CD14-positive monocyte (primary cell): ENCODE measurements at regions of chr19 and their contacts with region 1.

Region 1: DNA sequence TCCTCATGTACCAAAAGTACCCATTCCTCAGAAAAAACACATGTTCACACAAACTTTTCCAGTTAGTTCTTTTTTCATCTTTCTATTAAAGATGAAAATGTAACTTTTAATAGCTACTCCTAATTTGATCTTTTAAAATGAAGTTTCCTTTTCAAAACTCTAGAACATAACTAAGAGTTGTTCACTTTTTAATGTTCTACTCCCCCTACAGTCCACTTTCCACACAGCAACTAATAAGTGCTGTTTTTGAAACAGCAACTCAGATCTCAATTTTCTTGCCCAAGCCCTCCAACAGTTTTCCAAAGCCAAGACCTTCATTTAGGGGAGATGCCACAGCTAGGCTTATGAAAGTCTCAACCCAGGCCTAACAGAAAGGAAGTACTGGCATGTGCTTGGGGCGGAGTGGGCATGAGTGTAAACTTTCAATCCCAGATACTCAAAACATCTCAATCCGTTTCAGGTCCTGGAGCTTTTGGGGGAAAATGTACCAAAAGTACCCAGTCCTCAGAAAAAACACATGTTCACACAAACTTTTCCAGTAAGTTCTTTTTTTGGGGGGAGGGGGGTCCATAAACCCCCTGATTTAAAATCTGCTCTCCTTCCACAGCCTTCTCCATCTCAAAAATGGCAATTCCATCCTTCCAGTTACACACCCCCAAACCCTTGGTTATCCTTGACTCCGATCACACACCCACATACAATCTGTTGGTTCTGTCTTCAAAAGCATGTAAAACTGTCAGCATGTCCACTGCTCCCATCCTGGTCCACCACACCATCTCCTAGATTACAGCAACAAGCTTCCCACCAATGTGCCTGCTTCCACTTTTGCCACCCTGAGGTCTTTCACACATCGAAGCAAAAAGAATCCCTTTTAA is 2.0 kb downstream of the FBL start:
- DNase-seq: peak; percentile 29 to 55 (median 46)
- H3K4me3 ChIP-seq: no peak overlapping the region
- H3K4me3 Mint-ChIP-seq: no peak overlapping the region
- H3K27ac ChIP-seq: no peak overlapping the region
- H3K27ac Mint-ChIP-seq: peak overlapping the region in 2 of 7 donors; percentile 2 to 15
- H3K4me1 ChIP-seq: peaks cover 28 to 39% of the 10 kb centered on the region in 2 donors
- H3K4me1 Mint-ChIP-seq: peaks cover 46% of the 10 kb centered on the region
- H3K27me3 ChIP-seq: no peaks in the 10 kb centered on the region
- H3K27me3 Mint-ChIP-seq: no peaks in the 10 kb centered on the region
- CTCF ChIP-seq: peak; percentile 74

Region 2: DNA sequence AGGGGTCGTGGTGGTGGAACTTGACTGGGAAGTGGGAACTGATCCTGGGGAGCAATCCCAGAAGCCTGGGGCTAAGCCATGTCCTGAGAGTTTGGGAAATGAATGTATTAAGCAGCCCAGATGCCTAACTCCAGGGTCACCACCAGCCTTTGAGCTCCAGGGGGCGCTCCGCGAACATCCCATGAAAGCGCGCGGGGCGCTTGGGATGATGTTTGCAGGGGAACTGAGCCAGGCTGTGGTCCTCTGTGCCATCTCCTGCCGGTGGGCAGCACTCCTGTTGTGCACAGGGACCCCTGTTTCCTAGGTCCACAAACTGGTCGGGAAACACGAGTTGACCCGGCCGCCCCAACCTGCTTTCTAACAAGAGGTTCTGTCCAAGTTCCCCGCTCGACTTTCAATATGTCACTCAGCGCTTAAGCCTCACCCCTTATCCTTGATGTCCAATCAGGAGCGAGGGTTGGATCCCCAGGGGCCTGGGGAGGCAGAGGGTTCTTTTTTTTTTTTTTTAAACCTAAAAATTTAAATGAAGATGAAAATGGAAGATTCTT is 51.1 kb before region 1 on chr19:
- intact Hi-C with region 1: loop called (anchors 1 to 5 kb)
- DNase-seq: peak; percentile 42 to 56 (median 53)
- H3K4me3 ChIP-seq: peak overlapping the region; percentile 34 to 83 (median 47)
- H3K4me3 Mint-ChIP-seq: peak overlapping the region; percentile 79
- H3K27ac ChIP-seq: no peak overlapping the region
- H3K27ac Mint-ChIP-seq: no peak overlapping the region
- H3K4me1 ChIP-seq: peaks cover 0 to 6% of the 10 kb centered on the region in 2 donors
- H3K4me1 Mint-ChIP-seq: peaks cover 6% of the 10 kb centered on the region
- H3K27me3 ChIP-seq: peaks cover 0 to 2% of the 10 kb centered on the region in 2 donors
- H3K27me3 Mint-ChIP-seq: peaks cover 7 to 24% (median 11%) of the 10 kb centered on the region in 3 donors
- CTCF ChIP-seq: peak; percentile 96